Activated CD8-positive, alpha-beta T cell treated with anti-CD3 and anti-CD28 coated beads for 36 hours (primary cell): ENCODE measurements at regions of chr11 and their contacts with region 1.

Region 1: DNA sequence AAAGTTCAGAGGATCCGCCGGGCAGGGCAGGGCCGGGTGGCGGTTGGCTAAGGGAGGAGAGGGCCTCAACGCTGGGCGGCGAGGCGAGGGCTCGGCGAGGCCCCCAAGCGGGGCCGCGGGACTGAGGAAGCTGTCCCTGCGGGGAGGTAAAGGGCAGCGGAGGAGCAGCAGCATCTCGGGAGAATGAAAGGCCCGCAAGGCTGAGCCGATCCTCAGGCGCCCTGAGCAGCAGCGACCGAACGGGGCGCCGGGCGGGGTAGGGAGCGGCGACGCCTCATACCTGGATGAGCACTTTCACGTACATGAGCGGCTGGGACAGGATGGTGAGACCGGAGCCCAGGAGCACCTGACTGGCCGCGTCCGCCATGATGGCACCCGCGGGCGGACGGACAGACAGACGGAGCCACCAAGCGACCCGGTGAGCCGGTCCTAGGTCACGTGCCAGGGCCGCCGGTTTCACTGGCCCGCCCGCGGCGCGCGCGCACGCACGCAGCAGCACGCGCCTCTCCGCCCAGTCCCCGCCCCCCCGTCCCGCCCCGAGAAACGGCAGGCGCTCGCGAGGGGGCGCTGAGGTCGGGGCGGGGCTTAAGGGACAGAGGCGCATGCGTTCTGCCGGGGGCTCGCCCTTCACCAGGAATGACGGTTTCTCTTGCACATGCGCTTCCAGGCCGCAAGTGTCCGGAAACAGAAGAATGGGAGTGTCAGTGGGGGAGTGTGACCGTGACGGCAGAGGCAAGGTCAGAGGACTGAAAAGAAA is at the start of gene MTCH2:
- DNase-seq: peak; percentile 96
- ATAC-seq: peak; percentile 96
- H3K4me3 Mint-ChIP-seq: peak within 1 kb of the TSS; percentile 93
- H3K27ac Mint-ChIP-seq: peak within 1 kb of the TSS; percentile 95
- H3K4me1 Mint-ChIP-seq: peaks cover 15% of the 10 kb centered on the region
- H3K27me3 Mint-ChIP-seq: no peaks in the 10 kb centered on the region
- CTCF ChIP-seq: peak; percentile 12
- total RNA-seq, gene MTCH2: 144 to 145 TPM

Region 2: GRCh38 chr11:47686151-47686550 is 43.9 kb after region 1 on chr11:
- CTCF ChIA-PET with region 1: no interaction called
- POLR2A ChIA-PET with region 1: no interaction called
- intact Hi-C with region 1: no loop called
- DNase-seq: no peak
- ATAC-seq: no peak
- H3K4me3 Mint-ChIP-seq: no peak overlapping the region
- H3K27ac Mint-ChIP-seq: no peak overlapping the region
- H3K4me1 Mint-ChIP-seq: no peaks in the 10 kb centered on the region
- H3K27me3 Mint-ChIP-seq: no peaks in the 10 kb centered on the region
- CTCF ChIP-seq: no peak

Region 3: DNA sequence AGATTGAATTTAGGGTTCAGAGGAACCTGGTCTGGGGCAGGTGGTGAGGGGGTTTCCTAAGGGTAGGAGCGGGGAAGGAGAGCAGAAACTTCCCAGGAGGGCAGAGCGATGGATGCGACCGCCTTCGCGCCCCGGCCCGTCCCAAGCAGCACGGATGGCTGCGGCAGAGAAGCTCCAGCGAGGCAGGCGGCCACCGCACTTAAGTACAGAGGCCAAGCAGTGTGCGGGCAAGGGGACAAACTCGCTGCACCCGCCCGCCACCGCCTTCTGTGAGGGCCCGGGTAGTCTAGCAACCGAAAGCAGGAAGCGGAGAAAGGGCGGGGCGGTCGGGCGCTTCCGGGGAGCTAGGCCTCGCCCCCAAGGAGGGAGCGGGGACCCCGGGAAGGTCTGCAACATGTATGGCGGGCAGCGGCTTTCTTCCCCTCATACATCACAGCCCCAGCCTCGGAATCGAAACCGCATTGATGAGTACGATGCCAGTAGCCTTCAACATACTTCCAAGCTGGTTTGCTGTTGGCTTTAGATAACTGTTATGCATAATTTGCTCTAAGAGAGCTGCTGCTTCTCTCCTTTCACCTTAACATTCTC is 72.9 kb after region 1 on chr11 and contains the start of gene AGBL2:
- CTCF ChIA-PET with region 1: no interaction called
- POLR2A ChIA-PET with region 1: interaction called, 4 read pairs
- intact Hi-C with region 1: loop called (anchors 5 kb)
- DNase-seq: peak; percentile 94
- ATAC-seq: peak; percentile 99
- H3K4me3 Mint-ChIP-seq: peak within 1 kb of the TSS; percentile 87
- H3K27ac Mint-ChIP-seq: peak within 1 kb of the TSS; percentile 90
- H3K4me1 Mint-ChIP-seq: peaks cover 16% of the 10 kb centered on the region
- H3K27me3 Mint-ChIP-seq: no peaks in the 10 kb centered on the region
- CTCF ChIP-seq: no peak
- total RNA-seq, gene AGBL2: 4.5 to 7.1 TPM